Right ventricle myocardium inferior (tissue), 1 donor: ENCODE measurements at regions of chr11 and their contacts with region 1.

Region 1: GRCh38 chr11:133834682-133835592 is 10.4 kb downstream of the SPATA19 start:
- DNase-seq: no peak
- ATAC-seq: peak; percentile 72

Region 2: GRCh38 chr11:133134314-133135173 is 700.4 kb before region 1 on chr11:
- intact Hi-C with region 1: loop called (anchors 2 kb)
- DNase-seq: no peak
- ATAC-seq: peak; percentile 65

Region 3: DNA sequence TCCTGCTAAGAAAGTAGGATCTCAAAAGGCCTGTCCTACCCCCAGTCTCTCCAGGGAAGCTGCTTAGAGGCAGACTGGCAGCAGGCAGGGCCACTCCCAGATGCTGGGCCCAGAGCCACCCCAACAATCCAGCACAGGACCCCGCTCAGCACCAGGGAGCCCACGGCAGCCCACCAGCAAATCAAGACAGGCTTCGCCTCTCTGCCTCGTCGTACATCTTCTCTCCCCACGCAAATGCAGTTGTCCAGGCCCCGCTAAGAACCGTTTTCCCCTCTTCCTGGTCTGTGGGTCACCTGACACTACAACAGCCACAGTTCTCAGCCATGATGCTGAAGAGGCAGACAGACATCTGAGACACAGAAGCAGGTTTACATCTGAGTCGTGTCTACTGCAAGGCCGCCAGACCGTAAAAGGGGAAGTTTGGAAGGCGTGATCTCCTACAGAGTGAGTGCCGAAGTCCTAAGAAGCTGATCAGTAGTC is 70.8 kb after region 1 on chr11:
- intact Hi-C with region 1: no loop called
- DNase-seq: no peak
- ATAC-seq: no peak